ENCODE measurements at regions of chr19 and their contacts with region 1.

Region 1: DNA sequence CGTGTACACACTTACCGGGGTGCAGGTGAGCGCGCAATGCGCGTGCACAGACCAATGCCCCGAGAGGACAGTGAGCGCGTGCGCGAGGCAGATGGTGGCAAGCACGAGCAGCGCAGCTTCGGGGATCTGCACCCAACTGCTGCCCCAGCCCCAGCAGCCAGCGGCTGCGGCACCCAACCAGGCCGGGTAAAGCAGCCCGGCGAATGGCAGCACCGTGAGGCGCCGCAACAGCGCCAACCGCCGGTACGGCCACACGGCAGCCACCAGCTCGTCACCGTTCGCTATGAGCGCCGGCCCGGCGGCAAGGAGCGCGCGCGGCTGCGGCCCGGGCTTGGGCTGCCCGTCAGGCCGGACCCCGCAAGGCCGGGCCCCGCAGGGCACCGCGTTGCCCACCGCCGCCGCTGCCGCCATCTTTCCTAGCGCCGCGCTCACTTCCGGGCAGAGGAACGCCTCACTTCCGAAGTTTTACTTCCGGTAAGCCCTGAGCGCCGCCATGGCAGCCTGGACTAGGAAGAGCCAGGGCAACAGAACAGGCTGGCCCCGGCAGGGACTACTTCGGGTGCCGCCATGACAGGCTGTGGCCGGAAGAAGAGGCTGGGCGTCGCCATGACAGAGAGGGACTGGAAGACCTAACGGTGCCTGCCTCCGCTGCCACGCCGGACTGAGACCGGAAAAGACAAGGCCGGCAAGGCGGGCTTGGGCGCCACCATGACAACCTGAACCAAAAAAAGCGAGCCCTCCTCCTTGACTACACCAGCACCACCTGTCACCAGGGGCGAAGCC is at the start of gene ATP13A1:
- DNase-seq: peak; percentile 97
- ATAC-seq: peak; percentile 95
- H3K4me3 ChIP-seq: peak within 1 kb of the TSS; percentile 78
- H3K27ac ChIP-seq: peak within 1 kb of the TSS; percentile 93
- H3K4me1 ChIP-seq: peaks cover 9% of the 10 kb centered on the region; the same call in 1 of the 2 replicates
- H3K27me3 ChIP-seq: no peaks in the 10 kb centered on the region
- CTCF ChIP-seq: no peak
- POLR2A ChIP-seq: peak; percentile 76
- RAD21 ChIP-seq: no peak
- total RNA-seq, gene ATP13A1: 13.3 and 15.8 TPM in 2 replicates

Region 2: DNA sequence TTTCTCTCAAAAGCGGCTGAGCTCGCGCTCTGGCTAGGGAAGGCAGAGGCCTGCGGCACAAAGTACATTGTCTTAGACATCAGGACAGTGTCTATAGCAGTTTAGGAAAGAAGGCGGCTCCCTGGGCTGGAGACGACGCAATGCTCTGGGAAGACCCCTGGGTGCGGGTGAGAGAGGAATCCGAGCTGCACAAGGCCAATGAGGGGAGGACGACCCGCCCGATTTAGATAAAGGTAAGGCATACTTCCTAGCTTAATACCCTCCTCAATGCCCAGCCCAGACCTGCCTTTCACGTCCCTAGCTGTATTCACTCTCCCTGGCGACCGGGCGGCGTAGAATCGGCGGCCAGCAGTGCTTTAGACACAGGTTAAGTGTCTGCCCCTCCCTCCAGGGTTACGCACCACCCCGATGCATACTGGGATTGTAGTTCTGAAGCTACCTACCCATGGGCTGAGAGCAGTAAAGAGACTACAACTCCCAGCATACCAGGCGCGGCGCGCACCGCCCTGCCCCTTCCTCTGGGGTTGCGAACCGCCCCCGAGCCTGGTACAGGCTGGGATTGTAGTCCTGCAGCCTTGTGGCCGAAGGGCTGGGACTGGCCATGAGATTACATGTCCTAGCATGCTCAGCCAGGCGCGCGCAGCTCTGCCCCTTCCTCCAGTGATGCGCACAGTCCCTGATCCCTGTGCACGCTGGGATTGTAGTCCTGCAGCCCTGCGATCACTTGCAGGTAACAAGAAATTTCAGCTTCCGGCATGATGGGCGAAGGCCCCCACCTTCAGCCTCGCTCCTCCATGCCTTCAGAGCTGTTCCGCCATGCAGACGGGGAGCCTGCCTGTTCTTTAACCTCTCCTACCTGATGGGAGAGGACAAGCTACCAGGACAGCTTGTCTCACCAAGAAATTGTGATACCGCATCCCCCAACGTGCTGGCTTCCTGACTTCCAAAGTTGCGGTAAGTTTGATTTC is 112.9 kb after region 1 on chr19:
- CTCF ChIA-PET with region 1: no interaction called
- POLR2A ChIA-PET with region 1: no interaction called
- dilution Hi-C with region 1: no loop called
- in situ Hi-C with region 1: no loop called
- intact Hi-C with region 1: loop called (anchors 2 kb)
- DNase-seq: peak; percentile 98
- ATAC-seq: peak; percentile 99
- H3K4me3 ChIP-seq: peak overlapping the region; percentile 73
- H3K27ac ChIP-seq: peak overlapping the region; percentile 82
- H3K4me1 ChIP-seq: 0 out of 2 replicates have a peak, but pooled peaks cover 2% of the 10 kb centered on the region
- H3K27me3 ChIP-seq: no peaks in the 10 kb centered on the region
- CTCF ChIP-seq: no peak
- POLR2A ChIP-seq: no peak
- RAD21 ChIP-seq: no peak

Region 3: DNA sequence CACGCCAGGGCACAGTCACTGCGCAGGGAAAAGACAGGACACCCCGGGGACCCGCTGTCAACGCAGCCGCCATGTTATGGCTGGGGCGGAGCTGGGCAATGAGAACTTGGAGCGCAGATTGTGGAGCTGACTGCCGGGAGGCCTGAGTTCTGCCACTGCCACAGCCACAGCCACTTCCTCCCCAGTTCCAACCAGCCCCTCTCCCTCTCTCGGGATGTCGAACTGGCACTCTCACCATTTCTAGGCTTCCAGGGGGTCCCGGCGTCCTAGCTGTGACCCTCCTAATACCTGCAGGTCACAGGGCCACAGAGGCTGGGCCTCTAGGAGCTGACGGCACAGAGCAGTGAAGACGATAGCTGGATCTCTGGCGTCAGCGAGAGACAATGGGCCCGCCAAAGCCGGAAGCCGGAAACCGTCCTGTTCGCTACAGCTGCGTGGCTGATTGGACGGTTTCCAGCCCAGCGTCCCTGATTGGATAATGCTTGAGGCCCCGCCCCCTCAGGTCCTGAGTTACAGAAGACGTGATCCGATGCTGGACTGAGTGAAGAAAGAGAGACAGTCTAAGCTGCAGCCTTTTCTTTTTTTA is 158.0 kb after region 1 on chr19 and contains the start of gene ZNF506:
- CTCF ChIA-PET with region 1: interaction called, 3 read pairs
- POLR2A ChIA-PET with region 1: interaction called, 10 read pairs
- dilution Hi-C with region 1: no loop called
- in situ Hi-C with region 1: no loop called
- intact Hi-C with region 1: no loop called
- DNase-seq: peak; percentile 92
- ATAC-seq: peak; percentile 98
- H3K4me3 ChIP-seq: peak within 1 kb of the TSS; percentile 98
- H3K27ac ChIP-seq: peak within 1 kb of the TSS; percentile 97
- H3K4me1 ChIP-seq: no peaks in the 10 kb centered on the region
- H3K27me3 ChIP-seq: no peaks in the 10 kb centered on the region
- CTCF ChIP-seq: no peak
- POLR2A ChIP-seq: peak; percentile 77
- RAD21 ChIP-seq: no peak
- total RNA-seq, gene ZNF506: 6.1 and 8.1 TPM in 2 replicates